ENCODE measurements at regions of chr20 and their contacts with region 1.

Region 1: GRCh38 chr20:62972270-62973032 is 19.9 kb downstream of the SLC17A9 start:
- DNase-seq: peak; percentile 94
- ATAC-seq: peak; percentile 87
- H3K4me3 Mint-ChIP-seq: peak overlapping the region; percentile 60
- H3K27ac Mint-ChIP-seq: no peak overlapping the region
- H3K4me1 Mint-ChIP-seq: peaks cover 30% of the 10 kb centered on the region
- H3K27me3 Mint-ChIP-seq: peaks cover 49% of the 10 kb centered on the region
- CTCF ChIP-seq: peak; percentile 66

Region 2: DNA sequence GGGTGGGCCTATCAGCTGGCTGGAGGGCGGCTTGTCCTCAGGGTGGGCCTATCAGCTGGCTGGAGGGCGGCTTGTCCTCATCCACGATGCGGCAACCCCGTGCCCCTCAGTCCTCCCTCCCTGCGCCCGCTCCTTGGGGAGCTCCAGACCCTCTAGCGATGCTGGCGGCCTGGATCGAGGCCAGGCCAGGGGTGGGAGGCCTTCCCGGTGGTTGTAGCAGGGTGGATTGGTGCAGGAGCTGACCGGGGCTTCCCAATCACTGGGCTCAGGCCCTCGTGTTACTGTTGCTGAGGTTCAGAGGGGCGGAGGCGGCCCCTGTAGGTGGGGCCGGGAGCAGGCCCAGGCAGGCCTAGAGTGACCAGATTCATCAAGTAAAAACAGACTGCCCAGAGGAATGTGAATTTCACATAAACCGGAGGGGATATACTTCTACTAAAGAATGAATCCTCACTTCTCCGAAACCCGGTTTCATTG is 11.1 kb before region 1 on chr20:
- CTCF ChIA-PET with region 1: interaction called, 24 read pairs
- POLR2A ChIA-PET with region 1: no interaction called
- DNase-seq: peak; percentile 50
- ATAC-seq: peak; percentile 65
- H3K4me3 Mint-ChIP-seq: no peak overlapping the region
- H3K27ac Mint-ChIP-seq: peak overlapping the region; percentile 57
- H3K4me1 Mint-ChIP-seq: no peaks in the 10 kb centered on the region
- H3K27me3 Mint-ChIP-seq: no peaks in the 10 kb centered on the region
- CTCF ChIP-seq: no peak

Region 3: DNA sequence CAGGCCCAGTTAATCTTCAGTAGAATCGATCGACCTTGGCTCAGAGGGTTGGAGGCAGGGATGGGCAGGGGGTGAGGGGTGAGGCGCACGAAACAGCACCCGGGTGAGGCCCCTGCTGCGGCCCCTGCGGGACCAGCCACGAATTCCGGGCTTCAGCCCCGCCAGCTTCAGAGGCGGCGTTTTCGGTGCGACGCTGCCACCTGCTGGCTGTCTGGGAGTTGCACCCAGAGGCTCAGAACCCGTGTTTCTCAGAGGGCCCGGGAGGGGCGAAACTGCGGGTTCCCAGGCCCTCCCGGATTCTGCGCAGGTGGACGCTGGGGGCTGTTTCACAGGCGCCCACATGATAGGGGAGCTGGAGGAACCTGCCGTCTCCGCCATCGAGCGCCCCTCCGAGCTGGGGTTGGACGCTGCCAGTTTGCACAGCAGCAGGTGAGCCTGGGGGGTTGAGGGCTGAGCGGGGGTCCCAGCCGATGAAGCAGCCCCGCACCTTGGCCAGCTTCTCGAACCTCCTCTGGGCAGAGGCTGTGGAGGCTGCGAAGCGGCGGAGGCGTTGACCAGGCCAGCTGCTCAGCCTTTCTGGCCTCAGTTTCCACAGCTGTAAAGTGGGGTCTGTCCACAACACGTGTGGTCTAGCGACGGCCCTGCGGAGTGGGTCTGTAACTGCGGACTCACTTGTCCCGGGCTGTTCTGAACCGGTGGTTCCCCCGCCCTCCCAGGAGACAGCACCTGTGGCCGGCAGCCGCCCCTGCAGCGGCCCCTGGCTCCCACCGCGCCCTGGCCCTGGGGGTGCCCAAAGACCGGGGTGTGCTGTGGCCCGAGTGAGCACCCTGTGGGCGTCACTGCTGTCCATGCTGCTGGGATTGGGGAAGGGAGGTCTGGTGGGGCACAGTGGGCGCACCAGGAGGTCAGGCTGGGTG is 36.9 kb after region 1 on chr20:
- CTCF ChIA-PET with region 1: interaction called, 16 read pairs
- POLR2A ChIA-PET with region 1: interaction called, 3 read pairs
- DNase-seq: peak; percentile 90
- ATAC-seq: peak; percentile 52
- H3K4me3 Mint-ChIP-seq: peak overlapping the region; percentile 54
- H3K27ac Mint-ChIP-seq: no peak overlapping the region
- H3K4me1 Mint-ChIP-seq: peaks cover 21% of the 10 kb centered on the region
- H3K27me3 Mint-ChIP-seq: peaks cover 81% of the 10 kb centered on the region
- CTCF ChIP-seq: peak; percentile 79

Region 4: GRCh38 chr20:63032861-63033634 is 60.6 kb after region 1 on chr20:
- CTCF ChIA-PET with region 1: interaction called, 10 read pairs
- POLR2A ChIA-PET with region 1: no interaction called
- DNase-seq: peak; percentile 52
- ATAC-seq: peak; percentile 13
- H3K4me3 Mint-ChIP-seq: peak overlapping the region; percentile 49
- H3K27ac Mint-ChIP-seq: peak overlapping the region; percentile 91
- H3K4me1 Mint-ChIP-seq: peaks cover 49% of the 10 kb centered on the region
- H3K27me3 Mint-ChIP-seq: peaks cover 6% of the 10 kb centered on the region
- CTCF ChIP-seq: no peak

Measured in WTC11 (cell line).